ENCODE measurements at regions of chr2 and their contacts with region 1.

Region 1: DNA sequence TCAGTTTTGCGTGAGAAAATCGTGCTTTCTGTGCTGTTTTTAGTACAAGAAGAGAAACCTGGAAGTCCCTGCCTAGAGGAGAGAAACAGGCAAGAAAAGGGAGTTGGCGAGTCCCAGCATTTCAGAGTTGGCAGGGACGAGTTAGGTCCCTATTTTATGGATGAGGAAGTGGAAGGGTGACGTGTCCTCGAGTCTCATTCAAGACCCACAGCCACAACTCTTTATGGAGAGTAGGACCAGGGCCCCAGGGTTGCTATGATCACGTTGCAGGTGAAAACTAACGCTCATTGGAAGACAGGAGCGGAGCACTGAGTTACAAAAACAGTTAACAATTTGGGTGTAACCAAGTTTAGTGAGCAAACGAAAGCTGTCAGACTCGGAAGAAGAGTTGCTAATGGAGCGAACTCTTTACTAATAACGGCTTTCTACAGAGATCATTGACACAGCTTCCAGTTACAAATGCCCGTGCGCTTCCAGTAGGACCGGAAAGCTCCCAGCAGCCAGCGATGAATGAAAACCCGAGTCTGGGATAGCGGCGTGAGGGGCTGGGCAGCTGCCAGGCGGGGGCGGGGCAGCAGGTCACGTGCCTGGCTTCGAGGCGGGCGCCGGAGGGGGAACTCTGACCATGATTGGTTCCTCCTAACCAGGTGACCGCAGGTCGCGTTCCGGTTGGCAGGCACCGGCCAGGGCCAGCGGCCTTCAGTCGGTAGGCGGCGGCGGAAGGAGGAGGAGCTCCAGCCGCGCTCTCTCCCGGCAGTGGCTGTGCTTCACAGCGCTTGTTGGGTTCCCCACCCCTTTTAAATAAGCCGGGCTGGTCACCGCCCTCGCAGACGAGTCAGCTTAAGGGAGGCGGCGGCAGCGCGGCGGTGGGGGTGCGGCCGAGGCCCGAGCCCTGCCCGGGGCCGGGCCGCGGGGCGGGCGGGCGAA is at the start of gene CCNYL1:
- DNase-seq: peak; percentile 99
- H3K4me3 ChIP-seq: peak within 1 kb of the TSS; percentile 84 to 95
- H3K27ac ChIP-seq: peak within 1 kb of the TSS; percentile 84 to 87
- H3K4me1 ChIP-seq: no peaks in the 10 kb centered on the region
- H3K27me3 ChIP-seq: no peaks in the 10 kb centered on the region
- CTCF ChIP-seq: peak in 3 of 4 experiments; percentile 37 to 94 (median 72)
- POLR2A ChIP-seq: peak; percentile 95
- total RNA-seq, gene CCNYL1: 5.7 to 9.7 TPM

Region 2: DNA sequence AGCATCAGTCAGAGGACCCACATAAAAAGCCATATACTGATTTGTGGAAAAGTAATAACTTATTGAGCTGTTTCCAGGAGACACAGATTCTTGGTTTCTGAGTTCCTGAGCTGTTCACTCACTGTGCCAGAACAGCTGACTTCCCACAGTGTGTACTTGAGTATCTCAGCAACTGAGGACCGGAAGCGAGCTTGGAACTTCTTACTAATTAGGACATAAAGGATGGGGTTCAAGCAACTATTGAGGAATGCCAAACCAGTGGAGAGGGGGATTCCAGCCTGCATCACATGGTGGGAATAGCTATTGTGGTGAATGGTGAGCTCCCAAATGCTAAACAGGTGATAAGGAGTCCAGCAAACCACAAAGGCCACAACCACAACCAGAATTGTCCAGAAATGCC is 1535.0 kb before region 1 on chr2:
- intact Hi-C with region 1: no loop called
- DNase-seq: no peak
- H3K4me3 ChIP-seq: no peak overlapping the region
- H3K27ac ChIP-seq: no peak overlapping the region
- H3K4me1 ChIP-seq: no peaks in the 10 kb centered on the region
- H3K27me3 ChIP-seq: no peaks in the 10 kb centered on the region
- CTCF ChIP-seq: no peak
- POLR2A ChIP-seq: no peak

Region 3: DNA sequence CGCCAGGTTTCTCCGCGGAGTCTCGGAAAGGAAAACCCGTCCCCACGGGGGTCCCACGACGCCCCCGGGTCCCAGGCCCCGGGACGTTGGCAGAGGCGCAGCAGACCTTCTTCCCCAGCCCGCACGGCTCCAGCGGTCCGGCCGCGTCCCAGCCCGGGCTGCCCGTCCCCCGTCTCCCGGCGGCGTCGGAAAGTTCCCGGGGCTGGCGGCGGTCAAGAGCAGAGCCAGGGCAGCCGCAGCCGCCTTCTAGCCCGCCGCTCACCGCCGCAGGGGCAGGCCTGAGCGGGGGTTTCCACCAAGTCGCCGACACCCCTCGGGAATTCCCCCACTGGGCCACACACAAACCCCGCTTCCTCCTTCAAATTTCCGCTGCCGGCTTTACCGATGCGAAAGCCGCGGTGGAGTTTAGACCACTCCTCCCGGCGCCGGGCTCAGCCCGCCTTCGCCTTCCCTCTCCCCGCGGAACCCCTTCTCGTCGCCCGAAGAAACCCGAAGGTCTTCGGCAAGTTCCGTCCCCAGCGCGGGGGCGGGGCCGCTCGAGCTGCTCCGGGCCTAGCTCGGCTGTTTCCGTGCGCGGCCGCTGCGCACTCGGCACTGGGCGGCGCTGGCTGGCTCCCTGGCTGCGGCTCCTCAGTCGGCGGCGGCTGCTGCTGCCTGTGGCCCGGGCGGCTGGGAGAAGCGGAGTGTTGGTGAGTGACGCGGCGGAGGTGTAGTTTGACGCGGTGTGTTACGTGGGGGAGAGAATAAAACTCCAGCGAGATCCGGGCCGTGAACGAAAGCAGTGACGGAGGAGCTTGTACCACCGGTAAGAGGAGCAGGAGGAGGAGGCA is 181.5 kb before region 1 on chr2 and contains the start of gene CREB1:
- intact Hi-C with region 1: loop called (anchors 2 kb)
- DNase-seq: peak; percentile 98
- H3K4me3 ChIP-seq: peak within 1 kb of the TSS; percentile 66 to 78
- H3K27ac ChIP-seq: peak within 1 kb of the TSS; percentile 96 to 97
- H3K4me1 ChIP-seq: peaks cover 6% of the 10 kb centered on the region
- H3K27me3 ChIP-seq: no peaks in the 10 kb centered on the region
- CTCF ChIP-seq: peak in 2 of 4 experiments; percentile 26 to 46
- POLR2A ChIP-seq: peak; percentile 90
- total RNA-seq, gene CREB1: 44.0 to 47.1 TPM

Region 4: DNA sequence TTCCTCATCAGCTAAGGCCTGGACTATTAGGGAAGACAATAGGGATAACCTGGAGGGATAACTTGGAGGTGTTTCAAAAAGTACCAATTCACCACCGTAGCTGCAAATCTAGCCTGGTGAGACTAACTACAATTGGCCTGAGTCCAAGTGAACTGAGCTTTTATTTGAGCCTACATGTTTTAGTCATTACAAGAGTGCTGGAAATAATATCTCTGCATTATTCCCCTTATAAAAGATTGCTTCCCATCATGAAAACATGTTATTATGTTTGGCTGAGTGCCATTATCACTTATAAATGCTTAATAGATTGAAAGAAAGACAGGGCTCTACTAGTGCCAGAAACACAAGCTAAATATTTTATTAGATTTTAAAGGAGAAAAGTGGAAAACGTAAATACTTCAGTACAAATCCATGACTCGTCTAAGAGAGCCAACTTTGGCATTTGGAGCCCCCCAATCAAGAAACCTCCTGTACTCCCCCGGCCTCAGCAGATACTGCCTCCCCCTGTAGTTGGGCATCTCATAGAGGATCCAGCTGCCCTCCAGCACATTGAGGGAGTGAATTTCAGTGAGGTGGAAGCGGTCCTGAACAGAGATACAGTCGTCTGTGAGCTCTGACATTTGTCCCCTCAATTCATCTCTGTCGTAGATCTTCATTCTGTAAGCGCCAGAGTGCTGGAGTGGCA is 431.3 kb after region 1 on chr2:
- intact Hi-C with region 1: no loop called
- DNase-seq: no peak
- H3K4me3 ChIP-seq: no peak overlapping the region
- H3K27ac ChIP-seq: no peak overlapping the region
- H3K4me1 ChIP-seq: no peaks in the 10 kb centered on the region
- H3K27me3 ChIP-seq: no peaks in the 10 kb centered on the region
- CTCF ChIP-seq: no peak
- POLR2A ChIP-seq: no peak